ENCODE measurements at regions of chr6 and their contacts with region 1.

Region 1: DNA sequence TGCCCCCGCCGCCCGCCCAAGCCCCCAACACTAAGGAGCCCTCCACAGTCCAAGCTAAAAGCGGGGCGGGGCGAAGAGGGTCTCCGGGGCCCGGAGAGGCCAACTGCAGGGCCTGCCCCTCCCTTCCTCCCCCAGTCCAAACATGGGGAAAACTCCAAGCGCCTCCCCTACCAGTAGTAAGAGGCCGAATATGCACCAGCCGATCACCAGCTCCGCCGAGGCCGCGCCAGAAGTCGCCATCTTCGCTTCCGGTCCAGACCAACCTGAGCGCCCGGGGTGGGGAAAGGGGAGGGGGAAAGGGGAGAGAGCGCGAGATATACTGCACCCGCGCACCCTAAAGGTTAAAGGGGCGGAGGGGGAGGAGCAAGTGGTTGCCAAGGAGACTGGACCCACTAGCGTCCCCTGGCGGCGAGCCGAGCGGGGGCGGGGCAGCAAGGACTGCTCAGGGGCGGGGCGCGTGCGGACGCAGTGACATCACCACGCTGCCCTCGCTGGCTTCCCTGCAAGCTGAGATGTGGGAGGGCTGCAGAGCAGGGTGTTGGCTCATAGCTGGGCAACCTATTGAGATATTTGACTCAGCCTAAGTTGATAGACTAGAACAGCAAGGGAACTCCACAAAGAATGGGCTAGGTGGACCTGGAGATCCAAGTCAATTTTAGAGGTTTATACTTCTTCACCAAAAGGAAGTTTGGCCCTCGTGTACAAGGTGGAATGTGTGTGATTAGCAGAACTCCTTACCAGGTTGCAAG is at the start of gene LMBRD1:
- DNase-seq: peak; percentile 99
- H3K4me3 Mint-ChIP-seq: peak within 1 kb of the TSS; percentile 93
- H3K27ac Mint-ChIP-seq: peak within 1 kb of the TSS; percentile 96
- H3K4me1 Mint-ChIP-seq: peaks cover 42% of the 10 kb centered on the region
- H3K27me3 Mint-ChIP-seq: no peaks in the 10 kb centered on the region
- total RNA-seq, gene LMBRD1: 10.7 to 12.7 TPM

Region 2: GRCh38 chr6:69732640-69733039 is 64.2 kb before region 1 on chr6:
- CTCF ChIA-PET with region 1: interaction called, 8 read pairs
- intact Hi-C with region 1: loop called (anchors 1 kb)
- DNase-seq: no peak
- H3K4me3 Mint-ChIP-seq: no peak overlapping the region
- H3K27ac Mint-ChIP-seq: no peak overlapping the region
- H3K4me1 Mint-ChIP-seq: no peaks in the 10 kb centered on the region
- H3K27me3 Mint-ChIP-seq: no peaks in the 10 kb centered on the region

Region 3: DNA sequence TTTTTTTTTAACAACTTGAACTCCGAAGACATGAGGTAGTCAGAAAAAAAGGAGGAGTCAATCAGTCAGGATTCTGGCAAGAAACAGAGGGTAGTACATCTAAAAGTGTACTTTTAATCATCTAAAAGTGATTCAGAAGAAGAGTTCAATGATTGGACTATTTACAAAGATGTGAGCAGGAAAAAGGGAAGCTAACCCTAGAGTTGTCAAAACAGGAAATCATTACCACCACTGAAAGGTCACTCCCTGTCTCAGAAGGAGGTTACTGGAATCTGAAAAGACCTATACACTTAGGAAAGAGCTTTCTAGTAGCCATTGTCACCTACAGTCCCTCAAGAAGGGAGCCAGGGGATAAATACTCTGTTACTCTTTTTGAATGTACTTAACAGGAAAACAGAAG is 16.7 kb after region 1 on chr6:
- CTCF ChIA-PET with region 1: interaction called, 19 read pairs
- intact Hi-C with region 1: loop called (anchors 1 kb)
- DNase-seq: no peak
- H3K4me3 Mint-ChIP-seq: no peak overlapping the region
- H3K27ac Mint-ChIP-seq: peak overlapping the region; percentile 75
- H3K4me1 Mint-ChIP-seq: peaks cover 54% of the 10 kb centered on the region
- H3K27me3 Mint-ChIP-seq: no peaks in the 10 kb centered on the region

Region 4: GRCh38 chr6:69866770-69867638 is 70.2 kb after region 1 on chr6:
- CTCF ChIA-PET with region 1: interaction called, 7 read pairs
- intact Hi-C with region 1: loop called (anchors 1 kb)
- DNase-seq: peak; percentile 64
- H3K4me3 Mint-ChIP-seq: peak overlapping the region; percentile 70
- H3K27ac Mint-ChIP-seq: no peak overlapping the region
- H3K4me1 Mint-ChIP-seq: peaks cover 20% of the 10 kb centered on the region
- H3K27me3 Mint-ChIP-seq: peaks cover 5% of the 10 kb centered on the region

Region 5: GRCh38 chr6:69995870-69996269 is 199.1 kb after region 1 on chr6:
- CTCF ChIA-PET with region 1: no interaction called
- intact Hi-C with region 1: no loop called
- DNase-seq: no peak
- H3K4me3 Mint-ChIP-seq: no peak overlapping the region
- H3K27ac Mint-ChIP-seq: no peak overlapping the region
- H3K4me1 Mint-ChIP-seq: no peaks in the 10 kb centered on the region
- H3K27me3 Mint-ChIP-seq: peaks cover 14% of the 10 kb centered on the region

Region 6: DNA sequence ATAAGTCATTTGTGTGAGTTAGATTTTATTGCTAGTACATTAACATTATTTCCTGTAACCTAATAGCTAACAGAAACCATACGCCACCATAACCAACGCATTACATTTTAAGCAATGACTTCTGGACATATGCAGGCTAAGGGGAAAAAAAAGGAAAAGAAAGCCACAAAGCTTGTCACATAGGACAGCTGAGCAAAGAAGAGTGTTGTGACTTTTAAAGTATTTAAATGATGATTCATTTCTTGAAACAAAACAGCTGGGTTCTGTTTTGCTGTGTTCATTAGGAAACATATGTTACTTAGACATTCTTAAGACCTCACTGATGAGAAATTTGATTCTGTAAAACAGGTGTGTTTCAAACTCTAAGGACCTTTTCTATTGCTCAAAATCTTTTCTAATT is 334.7 kb after region 1 on chr6:
- CTCF ChIA-PET with region 1: no interaction called
- intact Hi-C with region 1: no loop called
- DNase-seq: no peak
- H3K4me3 Mint-ChIP-seq: no peak overlapping the region
- H3K27ac Mint-ChIP-seq: no peak overlapping the region
- H3K4me1 Mint-ChIP-seq: no peaks in the 10 kb centered on the region
- H3K27me3 Mint-ChIP-seq: peaks cover 4% of the 10 kb centered on the region

Region 7: GRCh38 chr6:70413114-70413991 is 616.5 kb after region 1 on chr6 and contains the start of gene FAM135A:
- CTCF ChIA-PET with region 1: no interaction called
- intact Hi-C with region 1: loop called (anchors 1 kb)
- DNase-seq: peak; percentile 99
- H3K4me3 Mint-ChIP-seq: peak within 1 kb of the TSS; percentile 99
- H3K27ac Mint-ChIP-seq: peak within 1 kb of the TSS; percentile 84
- H3K4me1 Mint-ChIP-seq: peaks cover 16% of the 10 kb centered on the region
- H3K27me3 Mint-ChIP-seq: no peaks in the 10 kb centered on the region
- total RNA-seq, gene FAM135A: 11.5 to 11.9 TPM

Region 8: DNA sequence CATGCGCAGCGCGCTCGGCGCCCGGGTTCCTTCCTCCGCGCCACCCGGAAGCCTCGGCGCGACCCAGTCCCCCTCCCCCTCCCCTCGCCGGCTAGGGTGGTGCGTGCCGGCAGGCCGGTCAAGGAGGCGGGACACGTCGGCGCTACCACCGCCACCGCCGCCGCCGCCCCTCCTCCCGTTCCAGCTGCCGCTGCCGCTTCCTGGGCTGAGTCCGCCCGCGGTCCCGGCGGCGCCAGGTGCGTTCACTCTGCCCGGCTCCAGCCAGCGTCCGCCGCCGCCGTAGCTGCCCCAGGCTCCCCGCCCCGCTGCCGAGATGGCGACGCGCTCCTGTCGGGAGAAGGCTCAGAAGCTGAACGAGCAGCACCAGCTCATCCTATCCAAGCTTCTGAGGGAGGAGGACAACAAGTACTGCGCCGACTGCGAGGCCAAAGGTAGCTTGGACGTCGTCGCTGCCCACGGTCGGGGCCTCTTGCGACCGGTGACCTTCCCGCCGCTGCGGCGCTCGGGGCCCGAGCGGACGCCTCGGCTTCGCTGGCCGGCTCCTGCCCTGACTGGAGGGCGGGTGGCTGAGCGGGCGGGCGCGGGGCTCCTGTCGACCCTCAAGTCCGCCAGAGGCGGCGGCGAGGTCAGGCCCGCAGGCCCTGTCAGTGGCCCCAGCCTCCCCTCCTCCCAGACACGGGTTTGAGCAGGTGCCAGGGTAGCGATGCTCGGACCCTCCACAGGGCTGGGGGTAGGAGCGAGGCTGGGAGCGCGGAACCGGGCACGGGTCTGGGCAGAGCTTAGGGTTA is 871.1 kb after region 1 on chr6 and contains the start of gene SMAP1:
- CTCF ChIA-PET with region 1: no interaction called
- intact Hi-C with region 1: loop called (anchors 5 kb)
- DNase-seq: peak; percentile 94
- H3K4me3 Mint-ChIP-seq: peak within 1 kb of the TSS; percentile 90
- H3K27ac Mint-ChIP-seq: peak within 1 kb of the TSS; percentile 93
- H3K4me1 Mint-ChIP-seq: peaks cover 52% of the 10 kb centered on the region
- H3K27me3 Mint-ChIP-seq: no peaks in the 10 kb centered on the region
- total RNA-seq, gene SMAP1: 15.8 to 16.1 TPM

Measured in activated naive CD4-positive, alpha-beta T cell treated with anti-CD3 and anti-CD28 coated beads for 36 hours (primary cell).